Spleen (tissue), 13 donors: ENCODE measurements at regions of chr14 and their contacts with region 1.

Region 1: DNA sequence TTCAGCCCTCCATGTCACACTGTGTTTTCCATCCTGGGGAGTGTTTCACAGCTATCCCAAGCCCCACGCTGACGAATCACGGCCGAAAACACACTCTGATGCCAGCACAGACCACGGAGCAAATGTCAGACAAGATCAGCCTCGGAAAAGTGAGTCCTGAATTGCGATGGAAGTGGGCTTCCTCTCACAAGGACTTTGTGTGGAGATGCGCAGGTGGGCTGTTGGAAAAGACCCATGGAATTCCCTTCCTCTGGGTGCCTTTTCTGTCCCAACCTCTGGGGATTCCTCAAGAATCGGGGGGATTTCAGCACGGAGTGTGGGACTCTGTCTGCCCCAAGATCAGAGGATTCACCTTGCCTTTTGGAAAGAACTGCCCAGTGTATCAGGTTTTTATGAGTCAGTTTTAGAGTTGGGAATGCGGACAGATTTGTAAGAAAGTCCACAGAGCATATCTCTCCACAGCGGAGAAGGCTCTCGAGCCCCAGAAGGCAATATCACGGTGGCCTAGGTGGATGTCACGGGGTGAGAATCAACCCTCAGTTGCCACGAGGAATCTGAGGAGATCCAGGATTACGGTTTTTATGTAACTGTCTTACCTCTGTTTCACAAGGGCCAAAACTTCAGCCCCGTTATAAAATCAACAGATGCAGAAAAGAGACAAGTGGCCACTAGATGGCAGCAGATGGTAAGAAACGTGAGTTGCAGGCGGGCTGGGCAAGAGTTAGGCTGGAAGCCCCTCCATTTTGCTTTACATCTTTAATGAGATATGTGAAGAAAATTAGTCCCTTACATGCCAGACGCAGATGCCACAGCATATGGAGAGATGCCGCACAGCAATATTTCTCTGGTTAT is 201.9 kb downstream of the DAD1 start:
- DNase-seq: peak; percentile 76
- H3K4me3 ChIP-seq: no peak overlapping the region
- H3K27ac ChIP-seq: no peak overlapping the region
- H3K4me1 ChIP-seq: peaks cover 0 to 35% (median 15%) of the 10 kb centered on the region in 6 donors
- H3K27me3 ChIP-seq: peaks cover 0 to 7% (median 0%) of the 10 kb centered on the region in 7 donors
- CTCF ChIP-seq: peak; percentile 44 to 81 (median 74)
- POLR2A ChIP-seq: no peak

Region 2: GRCh38 chr14:22472935-22473854 is 86.0 kb after region 1 on chr14:
- intact Hi-C with region 1: loop called (anchors 5 kb)
- DNase-seq: no peak
- H3K4me3 ChIP-seq: no peak overlapping the region
- H3K27ac ChIP-seq: peak overlapping the region in 4 of 8 donors; percentile 15 to 90 (median 66)
- H3K4me1 ChIP-seq: peaks cover 12 to 85% (median 28%) of the 10 kb centered on the region in 6 donors
- H3K27me3 ChIP-seq: no peaks in the 10 kb centered on the region
- CTCF ChIP-seq: peak; percentile 18 to 72 (median 63)
- POLR2A ChIP-seq: no peak

Region 3: DNA sequence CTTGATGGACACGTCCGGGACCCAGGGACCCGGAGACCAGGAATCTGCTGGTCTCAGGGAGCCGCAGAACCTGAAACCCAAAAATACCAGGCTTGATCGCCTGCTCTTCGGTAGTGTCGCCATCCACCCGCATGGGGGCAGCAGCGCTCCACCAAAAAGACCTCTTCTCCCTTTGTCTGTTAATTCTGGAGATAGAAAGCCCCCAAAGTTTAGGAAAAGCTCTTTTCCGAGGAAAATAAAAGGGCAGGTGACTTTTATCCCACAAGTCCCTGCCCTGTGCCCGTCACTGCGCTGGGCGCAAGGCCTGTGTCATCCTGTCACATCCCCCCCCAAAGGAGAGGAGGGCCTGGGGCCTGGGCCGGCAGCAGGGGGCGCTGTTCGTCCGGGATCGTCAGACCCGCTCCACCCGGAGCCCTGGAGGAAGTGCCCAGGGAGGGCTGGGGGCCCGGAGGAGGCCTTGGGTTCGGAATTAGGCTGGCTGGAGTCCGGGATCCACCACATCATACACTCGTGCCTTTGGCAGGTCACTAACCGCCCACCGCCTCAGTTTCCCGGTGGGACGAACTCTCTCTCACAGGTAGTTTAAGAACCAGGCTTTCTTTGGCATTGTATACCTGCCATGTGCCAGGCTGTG is 170.0 kb after region 1 on chr14:
- intact Hi-C with region 1: loop called (anchors 10 kb)
- DNase-seq: peak; percentile 97
- H3K4me3 ChIP-seq: peak overlapping the region in 7 of 8 donors; percentile 17 to 66 (median 28)
- H3K27ac ChIP-seq: peak overlapping the region; percentile 87 to 96 (median 91)
- H3K4me1 ChIP-seq: peaks cover 33 to 100% (median 92%) of the 10 kb centered on the region in 6 donors
- H3K27me3 ChIP-seq: no peaks in the 10 kb centered on the region
- CTCF ChIP-seq: peak; percentile 96 to 100 (median 99)
- POLR2A ChIP-seq: no peak

Region 4: GRCh38 chr14:22653012-22653621 is 266.0 kb after region 1 on chr14:
- intact Hi-C with region 1: loop called (anchors 10 kb)
- DNase-seq: no peak
- H3K4me3 ChIP-seq: no peak overlapping the region
- H3K27ac ChIP-seq: no peak overlapping the region
- H3K4me1 ChIP-seq: peaks cover 0 to 4% (median 0%) of the 10 kb centered on the region in 6 donors
- H3K27me3 ChIP-seq: no peaks in the 10 kb centered on the region
- CTCF ChIP-seq: peak; percentile 51 to 84 (median 77)
- POLR2A ChIP-seq: no peak